HAP-1 (cell line): ENCODE measurements at regions of chr17 and their contacts with region 1.

Region 1: DNA sequence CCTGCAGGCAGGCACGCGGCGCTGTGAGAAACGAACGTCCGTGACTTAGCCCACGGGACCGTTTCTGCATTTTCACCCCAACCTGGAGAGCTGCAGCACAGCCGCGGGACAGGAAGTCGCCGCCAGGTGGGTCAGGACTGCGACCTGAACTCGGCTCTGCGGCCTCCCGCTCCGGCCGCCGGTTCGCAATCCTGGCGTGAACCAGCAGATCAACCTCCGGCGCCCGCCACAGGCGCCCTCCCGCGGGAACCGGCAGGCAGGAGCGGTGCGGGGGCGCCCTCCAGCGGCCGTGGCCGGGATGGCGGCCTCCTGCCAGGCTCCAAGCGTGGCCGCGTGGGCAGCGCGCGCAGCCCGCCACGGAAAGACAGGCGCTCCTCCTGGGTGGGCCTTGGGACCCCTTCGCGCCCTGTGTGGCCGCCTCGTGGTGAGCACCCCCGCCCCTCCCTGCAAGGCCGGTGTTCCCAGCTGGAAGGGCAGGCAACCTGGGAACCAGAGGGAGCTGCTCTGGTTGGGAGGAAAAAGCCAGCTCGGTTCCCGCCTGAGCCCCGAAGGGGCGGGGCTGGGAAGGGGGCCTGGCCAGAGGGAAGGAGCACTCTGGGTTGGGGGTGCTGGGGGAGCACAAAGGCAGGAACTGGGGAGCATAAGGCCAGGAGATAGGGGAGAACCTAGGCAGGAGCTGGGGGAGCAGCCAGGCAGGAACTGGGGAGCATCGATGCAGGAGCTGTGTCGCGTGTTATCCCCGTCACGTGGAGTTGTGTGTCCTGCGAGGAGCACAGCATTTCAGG is 28.2 kb downstream of the ACTG1 start:
- DNase-seq: peak; percentile 81 to 93
- H3K4me3 ChIP-seq: peak overlapping the region; percentile 33
- H3K4me1 ChIP-seq: peaks cover 45% of the 10 kb centered on the region
- H3K27me3 ChIP-seq: no peaks in the 10 kb centered on the region

Region 2: DNA sequence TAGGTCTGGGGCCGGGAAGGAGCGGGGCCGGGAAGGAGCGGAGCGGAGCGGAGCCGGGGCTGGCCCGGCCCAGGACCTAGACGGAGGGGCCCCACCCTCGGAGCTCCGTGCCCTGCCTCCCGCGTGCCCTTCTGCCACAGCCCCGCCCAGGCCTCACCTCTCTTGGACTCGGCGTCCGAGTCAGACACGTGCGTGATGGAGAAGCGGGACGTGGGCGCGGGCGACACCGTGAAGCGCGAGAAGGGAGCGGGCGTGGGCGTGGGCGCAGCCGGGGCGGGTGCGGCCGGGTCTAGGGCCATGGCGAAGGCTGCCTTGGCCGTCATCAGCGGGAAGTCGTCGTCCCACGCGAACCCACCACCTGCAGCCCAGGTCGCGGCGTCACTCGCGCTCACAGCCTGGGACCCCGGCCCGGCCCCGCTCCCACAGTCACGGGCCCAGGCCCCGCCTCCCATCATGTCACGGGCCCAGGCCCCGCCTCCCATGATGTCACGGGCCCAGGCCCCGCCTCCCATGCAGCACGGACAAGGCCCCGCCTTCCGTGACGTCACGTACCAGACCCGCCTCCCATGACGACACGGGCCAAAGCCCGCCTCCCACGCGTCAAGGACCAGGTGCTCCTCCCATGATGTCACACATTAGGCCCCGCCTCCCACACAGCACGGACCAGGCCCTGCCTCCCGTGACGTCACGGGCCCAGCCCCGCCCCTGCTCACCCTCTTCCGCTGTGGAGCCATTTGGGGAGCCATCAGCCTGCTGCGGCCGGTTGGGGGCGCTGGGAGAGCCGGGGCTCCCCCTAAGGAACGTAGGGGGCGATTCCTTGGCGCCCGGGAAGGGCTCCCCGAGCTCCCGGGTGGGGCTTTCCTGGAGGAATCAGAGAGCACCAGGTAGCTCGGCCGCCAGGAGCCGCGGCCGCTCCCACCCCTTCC is 364.9 kb before region 1 on chr17:
- in situ Hi-C with region 1: no loop called
- DNase-seq: peak in 1 of 2 experiments; percentile 82
- H3K4me3 ChIP-seq: no peak overlapping the region
- H3K4me1 ChIP-seq: no peaks in the 10 kb centered on the region
- H3K27me3 ChIP-seq: no peaks in the 10 kb centered on the region

Region 3: DNA sequence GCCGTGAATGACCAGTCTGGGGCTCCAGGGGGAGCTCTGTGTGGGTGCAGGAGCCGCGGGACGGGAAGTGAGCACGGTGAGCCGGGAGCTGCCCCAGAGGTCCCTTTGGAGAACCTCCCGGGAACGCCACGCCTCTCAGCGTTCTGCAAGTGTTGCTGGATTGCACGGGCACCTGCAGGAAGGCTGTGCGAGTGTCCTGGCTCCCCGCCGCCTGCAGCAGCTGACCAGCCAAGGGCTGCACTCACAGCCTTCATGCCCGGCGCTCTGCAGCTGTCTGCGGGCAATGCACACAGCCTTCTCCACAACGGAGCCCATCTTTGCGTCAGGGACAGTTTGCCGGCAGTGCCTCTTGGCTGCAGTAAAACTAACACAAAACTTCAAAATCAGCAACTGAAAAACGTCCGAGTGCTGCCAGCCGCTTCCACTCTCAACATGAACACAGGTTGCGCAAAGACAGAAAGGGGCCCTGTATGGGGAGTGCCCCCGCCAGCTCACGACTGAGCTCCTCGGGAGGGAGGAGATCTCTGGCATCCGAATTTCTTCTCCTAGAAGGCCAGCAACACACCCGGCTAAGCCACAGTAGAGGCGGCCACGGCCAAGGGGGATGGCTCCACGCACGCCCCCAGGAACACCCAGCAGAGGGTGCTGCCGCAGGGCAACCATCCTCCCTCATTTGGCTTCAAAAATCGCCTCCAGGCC is 229.2 kb before region 1 on chr17:
- in situ Hi-C with region 1: loop called (anchors 5 kb)
- DNase-seq: peak; percentile 60 to 83
- H3K4me3 ChIP-seq: no peak overlapping the region
- H3K4me1 ChIP-seq: no peaks in the 10 kb centered on the region; the same call in 1 of the 2 replicates
- H3K27me3 ChIP-seq: no peaks in the 10 kb centered on the region

Region 4: GRCh38 chr17:81294856-81295680 is 189.3 kb before region 1 on chr17 and contains the start of gene SLC38A10:
- in situ Hi-C with region 1: loop called (anchors 5 kb)
- DNase-seq: peak; percentile 69 to 94
- H3K4me3 ChIP-seq: peak within 1 kb of the TSS; percentile 92
- H3K4me1 ChIP-seq: peaks cover 12% of the 10 kb centered on the region
- H3K27me3 ChIP-seq: no peaks in the 10 kb centered on the region

Region 5: GRCh38 chr17:81394921-81395599 is 89.3 kb before region 1 on chr17 and contains the start of gene BAHCC1:
- in situ Hi-C with region 1: loop called (anchors 10 kb)
- DNase-seq: peak; percentile 99 to 100
- H3K4me3 ChIP-seq: peak within 1 kb of the TSS; percentile 67
- H3K4me1 ChIP-seq: peaks cover 17% of the 10 kb centered on the region
- H3K27me3 ChIP-seq: no peaks in the 10 kb centered on the region